ENCODE measurements at regions of chr11 and their contacts with region 1.

Region 1: DNA sequence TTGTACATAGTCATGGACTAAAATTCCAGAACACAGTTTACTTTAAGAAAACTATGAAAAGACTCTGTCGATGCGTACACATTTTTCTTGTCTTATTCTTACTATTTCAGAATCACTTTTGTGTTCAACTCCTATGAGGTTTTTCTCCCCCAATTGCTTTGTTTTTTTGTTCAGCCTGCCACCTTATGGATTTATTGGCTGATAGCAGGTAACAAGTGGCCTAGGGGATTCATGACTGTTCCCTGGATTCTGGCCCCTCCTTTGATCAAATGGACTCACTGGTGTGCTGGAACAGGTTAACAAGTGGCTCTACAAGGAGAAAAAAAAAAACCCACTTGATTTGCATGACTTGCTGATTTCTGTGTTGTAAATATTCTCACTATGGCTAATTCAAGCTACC is 10.6 kb downstream of the MMP20 start:
- DNase-seq: peak; percentile 23
- H3K4me3 ChIP-seq: no peak overlapping the region
- H3K27ac ChIP-seq: no peak overlapping the region
- H3K4me1 ChIP-seq: peaks cover 21% of the 10 kb centered on the region
- CTCF ChIP-seq: peak; percentile 68

Region 2: DNA sequence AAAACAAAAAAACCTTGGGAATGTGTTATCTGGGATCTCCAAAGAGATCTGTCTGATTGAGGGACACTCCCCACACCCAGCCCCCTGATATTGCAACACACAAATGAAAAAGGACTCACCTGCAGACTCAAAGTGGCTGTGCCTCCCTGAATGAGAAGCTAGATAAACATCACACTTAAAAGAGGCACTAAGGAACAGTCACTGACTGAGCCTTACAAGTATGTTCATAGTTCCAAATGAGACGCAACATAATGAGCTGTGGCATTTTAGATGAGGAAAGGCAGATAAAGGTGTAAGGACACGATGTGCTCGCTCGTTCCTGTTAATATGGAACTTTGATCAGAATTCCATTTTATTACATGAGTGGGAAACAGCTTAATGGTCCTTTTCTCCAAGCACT is 588.3 kb before region 1 on chr11:
- CTCF ChIA-PET with region 1: no interaction called
- POLR2A ChIA-PET with region 1: no interaction called
- intact Hi-C with region 1: no loop called
- DNase-seq: no peak
- H3K4me3 ChIP-seq: no peak overlapping the region
- H3K27ac ChIP-seq: no peak overlapping the region
- H3K4me1 ChIP-seq: no peaks in the 10 kb centered on the region
- CTCF ChIP-seq: no peak

Region 3: DNA sequence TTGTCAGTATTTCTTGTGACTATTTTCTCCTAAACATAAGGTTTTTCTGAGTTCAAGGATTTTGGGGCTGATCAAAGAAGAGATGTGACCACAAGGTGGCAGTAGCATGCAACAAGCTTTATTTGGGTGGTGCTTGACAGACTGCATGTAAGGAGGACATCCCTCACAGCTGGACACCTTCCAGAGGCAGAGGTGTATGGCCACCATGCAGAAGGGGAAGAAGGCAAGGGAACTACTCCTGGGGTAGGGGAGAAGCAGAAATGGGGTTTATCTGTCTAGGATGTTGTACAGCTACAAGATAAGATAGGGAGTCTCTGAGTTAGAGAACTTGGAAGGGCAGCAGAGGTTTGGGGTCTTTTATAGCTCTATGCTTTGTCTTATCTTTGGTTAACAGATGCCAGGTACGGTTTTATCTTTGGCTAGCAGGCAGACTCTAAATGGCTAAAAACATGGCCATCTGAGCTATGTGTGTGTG is 272.6 kb before region 1 on chr11:
- CTCF ChIA-PET with region 1: interaction called, 29 read pairs
- POLR2A ChIA-PET with region 1: interaction called, 5 read pairs
- intact Hi-C with region 1: loop called (anchors 1 kb)
- DNase-seq: peak; percentile 86
- H3K4me3 ChIP-seq: no peak overlapping the region
- H3K27ac ChIP-seq: no peak overlapping the region
- H3K4me1 ChIP-seq: peaks cover 11% of the 10 kb centered on the region
- CTCF ChIP-seq: peak; percentile 97

Region 4: GRCh38 chr11:102390667-102391465 is 223.6 kb before region 1 on chr11:
- CTCF ChIA-PET with region 1: interaction called, 9 read pairs
- POLR2A ChIA-PET with region 1: interaction called, 3 read pairs
- intact Hi-C with region 1: loop called (anchors 5 kb)
- DNase-seq: peak; percentile 74
- H3K4me3 ChIP-seq: no peak overlapping the region
- H3K27ac ChIP-seq: no peak overlapping the region
- H3K4me1 ChIP-seq: peaks cover 28% of the 10 kb centered on the region
- CTCF ChIP-seq: peak; percentile 95

Region 5: DNA sequence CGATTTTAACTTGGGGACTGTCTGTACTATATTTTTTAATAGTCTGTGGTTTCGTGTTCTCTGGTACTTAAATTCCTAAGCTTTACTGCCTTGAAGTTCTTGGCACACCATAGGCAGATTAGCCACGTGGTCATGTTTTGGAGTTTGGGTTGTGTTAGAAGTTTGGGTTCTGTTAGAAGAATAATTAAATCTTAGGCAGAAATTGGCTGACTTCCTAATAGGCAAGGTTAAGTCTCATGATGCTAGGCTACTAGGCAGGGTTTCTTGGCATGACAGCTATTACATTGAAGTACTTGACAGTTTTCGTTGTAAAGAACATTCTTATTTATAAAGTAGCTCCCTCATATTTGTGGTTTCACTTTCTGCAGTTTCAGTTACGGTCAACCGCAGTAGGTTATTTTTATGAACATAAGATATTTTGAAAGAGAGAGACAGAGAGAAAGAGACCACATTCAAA is 53.9 kb before region 1 on chr11:
- CTCF ChIA-PET with region 1: no interaction called
- POLR2A ChIA-PET with region 1: interaction called, 10 read pairs
- intact Hi-C with region 1: no loop called
- DNase-seq: peak; percentile 59
- H3K4me3 ChIP-seq: peak overlapping the region; percentile 52
- H3K27ac ChIP-seq: peak overlapping the region; percentile 88
- H3K4me1 ChIP-seq: peaks cover 44% of the 10 kb centered on the region
- CTCF ChIP-seq: no peak

Region 6: DNA sequence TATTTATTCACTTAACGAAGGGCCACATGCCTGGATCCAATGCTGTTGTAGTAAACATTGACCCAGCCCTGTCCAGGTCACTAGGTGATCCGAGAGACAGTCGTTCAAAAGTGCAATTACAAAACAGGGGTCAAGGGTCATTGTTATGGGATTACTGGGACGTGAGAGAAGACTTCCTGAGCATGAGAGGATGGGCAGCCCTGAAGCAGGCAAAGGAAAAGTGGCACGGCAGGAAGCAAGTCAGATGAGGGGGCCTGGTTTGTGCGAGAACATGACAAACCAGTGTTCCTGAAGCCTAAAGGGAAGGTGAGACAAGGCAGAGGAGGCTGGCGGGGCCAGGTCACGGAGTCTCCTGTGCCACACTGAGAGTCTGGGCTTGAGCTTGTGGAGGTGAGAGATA is 26.5 kb after region 1 on chr11:
- CTCF ChIA-PET with region 1: no interaction called
- POLR2A ChIA-PET with region 1: interaction called, 10 read pairs
- intact Hi-C with region 1: no loop called
- DNase-seq: no peak
- H3K4me3 ChIP-seq: no peak overlapping the region
- H3K27ac ChIP-seq: no peak overlapping the region
- H3K4me1 ChIP-seq: no peaks in the 10 kb centered on the region
- CTCF ChIP-seq: no peak